ENCODE measurements at regions of chrX and their contacts with region 1.

Region 1: DNA sequence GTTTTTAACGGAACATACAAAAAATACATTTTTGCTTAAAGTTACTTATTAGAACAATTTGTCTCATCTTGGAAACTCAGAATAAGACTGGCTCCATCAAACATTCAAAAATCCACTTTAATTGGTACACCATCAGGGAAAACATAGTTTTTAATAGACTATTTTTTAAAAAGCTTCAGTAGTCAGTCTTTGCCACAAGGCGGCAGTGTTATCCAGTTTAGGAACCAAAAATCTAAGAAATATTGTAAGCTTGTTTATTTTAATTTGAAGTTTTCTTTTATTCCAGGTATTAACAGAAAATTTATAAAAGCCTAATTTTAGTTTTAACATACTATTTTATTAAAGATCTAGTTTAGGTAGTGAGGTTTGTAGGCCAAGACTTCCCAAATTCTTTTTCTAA is 107.7 kb downstream of the APOOL start:
- DNase-seq: no peak
- H3K4me3 ChIP-seq: no peak overlapping the region
- H3K27ac ChIP-seq: no peak overlapping the region
- H3K4me1 ChIP-seq: no peaks in the 10 kb centered on the region
- H3K27me3 ChIP-seq: no peaks in the 10 kb centered on the region
- CTCF ChIP-seq: peak in 1 of 3 experiments; percentile 20; a peak in 2 of 4 replicates
- EP300 ChIP-seq: no peak
- POLR2A ChIP-seq: no peak
- RAD21 ChIP-seq: peak in 1 of 2 experiments; percentile 45; a peak in 2 of 4 replicates

Region 2: GRCh38 chrX:84974803-84975202 is 136.5 kb before region 1 on chrX:
- CTCF ChIA-PET with region 1: no interaction called
- POLR2A ChIA-PET with region 1: no interaction called
- DNase-seq: no peak
- H3K4me3 ChIP-seq: no peak overlapping the region
- H3K27ac ChIP-seq: no peak overlapping the region
- H3K4me1 ChIP-seq: no peaks in the 10 kb centered on the region
- H3K27me3 ChIP-seq: no peaks in the 10 kb centered on the region
- CTCF ChIP-seq: no peak
- EP300 ChIP-seq: no peak
- POLR2A ChIP-seq: no peak
- RAD21 ChIP-seq: no peak

Region 3: DNA sequence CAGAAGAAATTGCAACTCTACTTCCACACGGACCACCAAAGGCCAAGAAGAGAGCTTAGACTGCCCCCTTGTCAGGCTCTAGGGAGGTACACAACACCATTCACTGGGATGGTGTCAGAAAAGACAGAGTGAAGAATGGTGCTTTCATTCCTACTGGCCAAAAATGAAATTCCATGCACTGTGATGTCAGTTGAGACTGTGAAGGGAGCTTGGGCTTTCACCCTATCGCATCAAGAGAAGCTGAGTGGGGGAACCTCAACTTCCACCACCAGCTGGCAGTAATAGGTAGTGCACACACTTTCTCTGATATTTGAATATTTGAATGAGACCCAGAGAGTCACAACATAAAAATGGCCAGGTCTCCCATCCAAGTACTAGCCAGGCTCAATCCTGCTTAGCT is 198.4 kb after region 1 on chrX:
- CTCF ChIA-PET with region 1: interaction called, 11 read pairs
- POLR2A ChIA-PET with region 1: no interaction called
- DNase-seq: no peak
- H3K4me3 ChIP-seq: no peak overlapping the region
- H3K27ac ChIP-seq: no peak overlapping the region
- H3K4me1 ChIP-seq: no peaks in the 10 kb centered on the region
- H3K27me3 ChIP-seq: no peaks in the 10 kb centered on the region
- CTCF ChIP-seq: peak in 1 of 3 experiments; percentile 19; a peak in 1 of 4 replicates
- EP300 ChIP-seq: no peak
- POLR2A ChIP-seq: no peak
- RAD21 ChIP-seq: 0 out of 4 replicates have a peak, but pooled peaks of 1 of the 2 experiments have one; percentile 2